ENCODE measurements at regions of chr19 and their contacts with region 1.

Region 1: GRCh38 chr19:11781295-11782052 is 14.7 kb downstream of the ZNF441 start:
- DNase-seq: no peak
- H3K4me3 ChIP-seq: no peak overlapping the region
- H3K27ac ChIP-seq: no peak overlapping the region
- H3K4me1 ChIP-seq: no peaks in the 10 kb centered on the region
- H3K27me3 ChIP-seq: no peaks in the 10 kb centered on the region
- CTCF ChIP-seq: no peak

Region 2: GRCh38 chr19:11519138-11519537 is 262.3 kb before region 1 on chr19:
- CTCF ChIA-PET with region 1: no interaction called
- dilution Hi-C with region 1: loop called (anchors 5 kb)
- in situ Hi-C with region 1: no loop called
- intact Hi-C with region 1: no loop called
- DNase-seq: no peak
- H3K4me3 ChIP-seq: no peak overlapping the region
- H3K27ac ChIP-seq: no peak overlapping the region
- H3K4me1 ChIP-seq: no peaks in the 10 kb centered on the region
- H3K27me3 ChIP-seq: no peaks in the 10 kb centered on the region
- CTCF ChIP-seq: no peak

Region 3: DNA sequence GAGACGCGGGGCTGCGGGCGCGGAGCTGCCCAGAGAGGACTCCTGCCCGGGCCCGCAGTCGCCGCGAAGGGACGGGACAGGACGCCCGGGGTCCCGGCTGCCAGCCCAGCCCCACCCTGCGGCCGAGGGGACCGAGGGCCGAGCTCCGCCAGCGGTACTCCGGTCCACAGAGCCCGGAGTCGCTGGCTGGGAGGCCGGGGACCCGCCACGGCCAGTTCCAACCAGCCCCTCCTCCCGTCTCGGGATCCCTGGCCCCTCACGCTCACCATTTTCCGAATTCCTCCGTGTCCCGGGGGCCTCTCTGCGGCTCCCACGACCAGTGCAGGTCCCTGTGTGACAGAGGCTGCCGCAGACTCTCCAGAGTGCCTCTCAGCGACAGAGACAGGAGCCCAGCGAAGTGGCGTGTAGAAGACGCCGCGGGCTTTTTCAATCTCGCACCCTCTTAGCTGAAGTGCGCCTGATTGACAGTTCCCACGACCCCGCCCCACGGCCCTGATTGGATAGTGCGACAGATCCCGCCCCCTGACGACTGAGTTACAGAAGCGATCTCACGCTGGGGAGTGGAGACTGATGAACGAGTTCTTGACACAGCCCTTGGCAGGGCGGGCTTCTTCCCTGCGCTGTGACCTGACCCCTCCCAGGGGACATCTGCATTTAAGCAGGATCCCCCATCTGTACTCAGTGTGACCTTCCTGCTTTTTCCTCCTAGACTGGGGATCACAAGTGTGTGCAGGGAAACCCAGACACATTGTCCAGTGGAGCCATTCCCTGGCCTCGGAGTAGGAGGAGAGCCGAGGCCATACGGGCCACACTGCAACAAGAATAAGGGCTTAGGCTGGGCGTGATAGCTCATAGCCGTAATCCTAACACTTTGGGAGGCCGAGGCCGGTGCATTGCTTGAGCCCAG is 86.7 kb before region 1 on chr19:
- CTCF ChIA-PET with region 1: no interaction called
- dilution Hi-C with region 1: no loop called
- in situ Hi-C with region 1: loop called in 1 of 2 experiments (anchors 10 kb)
- intact Hi-C with region 1: no loop called
- DNase-seq: peak; percentile 86
- H3K4me3 ChIP-seq: peak overlapping the region; percentile 59 to 77 (median 61)
- H3K27ac ChIP-seq: no peak overlapping the region
- H3K4me1 ChIP-seq: no peaks in the 10 kb centered on the region
- H3K27me3 ChIP-seq: no peaks in the 10 kb centered on the region
- CTCF ChIP-seq: no peak

Region 4: GRCh38 chr19:11708457-11708856 is 73.0 kb before region 1 on chr19:
- CTCF ChIA-PET with region 1: no interaction called
- dilution Hi-C with region 1: loop called (anchors 5 kb)
- in situ Hi-C with region 1: no loop called
- intact Hi-C with region 1: no loop called
- DNase-seq: no peak
- H3K4me3 ChIP-seq: no peak overlapping the region
- H3K27ac ChIP-seq: no peak overlapping the region
- H3K4me1 ChIP-seq: no peaks in the 10 kb centered on the region
- H3K27me3 ChIP-seq: no peaks in the 10 kb centered on the region
- CTCF ChIP-seq: no peak

Region 5: DNA sequence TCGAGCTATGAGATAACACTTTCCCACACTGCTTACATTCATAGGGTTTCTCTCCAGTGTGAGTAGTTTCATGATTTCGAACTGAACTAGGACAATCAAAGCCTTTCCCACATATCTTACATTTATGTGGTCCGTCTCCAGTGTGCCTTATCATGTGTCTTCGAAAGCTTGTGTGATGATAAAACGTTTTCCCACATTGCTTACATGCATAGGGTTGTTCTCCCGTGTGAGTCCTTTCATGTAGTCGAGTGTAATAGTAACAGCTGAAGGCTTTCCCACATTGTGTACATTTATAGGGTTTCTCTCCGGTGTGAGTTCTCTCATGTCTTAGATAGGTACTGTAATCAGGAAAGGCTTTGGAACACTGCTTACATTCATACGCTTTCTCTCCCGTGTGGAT is 59.1 kb before region 1 on chr19:
- CTCF ChIA-PET with region 1: no interaction called
- dilution Hi-C with region 1: no loop called
- in situ Hi-C with region 1: no loop called
- intact Hi-C with region 1: no loop called
- DNase-seq: no peak
- H3K4me3 ChIP-seq: no peak overlapping the region
- H3K27ac ChIP-seq: no peak overlapping the region
- H3K4me1 ChIP-seq: no peaks in the 10 kb centered on the region
- H3K27me3 ChIP-seq: no peaks in the 10 kb centered on the region
- CTCF ChIP-seq: no peak

Region 6: GRCh38 chr19:11856596-11857250 is 75.2 kb after region 1 on chr19:
- CTCF ChIA-PET with region 1: no interaction called
- dilution Hi-C with region 1: loop called (anchors 5 kb)
- in situ Hi-C with region 1: no loop called
- intact Hi-C with region 1: no loop called
- DNase-seq: no peak
- H3K4me3 ChIP-seq: no peak overlapping the region
- H3K27ac ChIP-seq: no peak overlapping the region
- H3K4me1 ChIP-seq: no peaks in the 10 kb centered on the region
- H3K27me3 ChIP-seq: no peaks in the 10 kb centered on the region
- CTCF ChIP-seq: no peak

Measured in mammary epithelial cell (primary cell).